MCF 10A (cell line): ENCODE measurements at regions of chr15 and their contacts with region 1.

Region 1: DNA sequence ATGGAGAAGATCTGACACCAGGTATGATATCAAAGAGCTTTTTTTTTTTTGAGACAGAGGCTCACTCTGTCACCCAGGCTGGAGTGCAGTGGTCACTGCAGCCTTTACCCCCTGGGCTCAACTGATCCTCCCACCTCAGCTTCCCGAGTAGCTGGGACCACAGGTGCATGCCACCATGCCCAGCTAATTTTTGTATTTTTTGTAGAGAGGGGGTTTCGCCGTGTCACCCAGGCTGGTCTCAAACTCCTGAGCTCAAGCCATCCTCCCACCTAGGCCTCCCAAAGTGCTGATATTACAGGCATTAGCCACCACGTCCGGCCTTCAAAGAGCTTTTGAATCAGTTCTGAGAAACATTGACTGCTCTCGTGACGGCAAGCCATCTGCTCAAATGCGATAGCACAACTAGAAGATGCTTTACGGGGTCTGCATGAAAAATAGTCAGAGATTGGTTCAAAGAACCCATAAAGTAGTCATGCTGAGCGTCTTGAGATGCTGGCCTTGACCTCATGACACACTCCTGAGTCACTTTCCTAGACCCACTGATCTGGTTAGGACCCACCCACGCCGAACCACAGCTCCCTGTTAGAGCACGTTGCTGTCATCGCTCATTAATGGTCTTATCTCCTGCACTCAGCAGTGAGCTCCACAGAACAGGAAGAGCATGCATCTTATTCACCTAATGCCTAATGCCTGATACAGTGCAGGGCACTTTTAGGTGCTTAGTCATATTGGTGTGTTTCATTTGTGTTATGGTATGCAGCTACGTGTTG is 57.0 kb upstream of the NR2F2 start:
- DNase-seq: peak; percentile 91
- H3K4me3 Mint-ChIP-seq: peak overlapping the region; percentile 4
- H3K27ac Mint-ChIP-seq: peak overlapping the region; percentile 69
- H3K4me1 Mint-ChIP-seq: peaks cover 48% of the 10 kb centered on the region
- H3K27me3 Mint-ChIP-seq: no peaks in the 10 kb centered on the region
- CTCF ChIP-seq: no peak

Region 2: GRCh38 chr15:96115642-96116041 is 157.9 kb before region 1 on chr15:
- CTCF ChIA-PET with region 1: no interaction called
- POLR2A ChIA-PET with region 1: interaction called, 3 read pairs
- intact Hi-C with region 1: loop called (anchors 10 kb)
- DNase-seq: no peak
- H3K4me3 Mint-ChIP-seq: no peak overlapping the region
- H3K27ac Mint-ChIP-seq: no peak overlapping the region
- H3K4me1 Mint-ChIP-seq: no peaks in the 10 kb centered on the region
- H3K27me3 Mint-ChIP-seq: no peaks in the 10 kb centered on the region
- CTCF ChIP-seq: no peak

Region 3: DNA sequence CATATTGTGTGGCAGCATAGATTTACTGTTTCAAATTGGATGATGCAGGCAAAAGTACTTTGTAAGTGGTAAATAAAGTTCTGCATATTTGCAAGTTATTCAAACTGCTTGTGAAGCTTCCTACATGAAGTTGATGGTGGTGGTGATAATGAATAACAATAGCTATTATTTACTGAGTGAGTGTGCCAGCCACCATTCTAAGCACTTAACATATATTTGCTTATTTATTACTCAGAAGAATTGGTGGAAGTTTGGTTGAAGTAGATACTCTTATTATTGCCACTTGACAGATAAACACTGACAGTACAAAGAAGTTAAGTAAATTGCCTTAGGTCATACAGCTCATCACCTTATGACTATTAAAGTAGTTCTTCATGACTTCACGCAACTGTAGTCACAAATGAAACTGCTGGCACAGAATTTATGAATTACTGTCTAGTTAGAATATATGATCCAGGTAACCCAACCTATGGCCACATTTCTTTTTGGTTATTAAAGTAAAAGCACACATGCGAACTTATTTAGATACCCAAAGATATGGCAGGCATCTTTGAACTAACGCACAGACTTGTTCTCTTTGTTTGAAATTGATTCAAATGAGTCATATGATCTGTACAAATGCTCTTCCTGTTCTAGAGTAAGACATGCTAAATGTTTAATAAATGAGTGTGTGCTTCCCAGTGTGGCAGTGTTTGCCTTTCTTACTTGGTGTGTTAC is 42.9 kb before region 1 on chr15:
- CTCF ChIA-PET with region 1: no interaction called
- POLR2A ChIA-PET with region 1: no interaction called
- intact Hi-C with region 1: loop called (anchors 1 kb)
- DNase-seq: peak; percentile 45
- H3K4me3 Mint-ChIP-seq: no peak overlapping the region
- H3K27ac Mint-ChIP-seq: peak overlapping the region; percentile 49
- H3K4me1 Mint-ChIP-seq: peaks cover 34% of the 10 kb centered on the region
- H3K27me3 Mint-ChIP-seq: no peaks in the 10 kb centered on the region
- CTCF ChIP-seq: no peak

Region 4: DNA sequence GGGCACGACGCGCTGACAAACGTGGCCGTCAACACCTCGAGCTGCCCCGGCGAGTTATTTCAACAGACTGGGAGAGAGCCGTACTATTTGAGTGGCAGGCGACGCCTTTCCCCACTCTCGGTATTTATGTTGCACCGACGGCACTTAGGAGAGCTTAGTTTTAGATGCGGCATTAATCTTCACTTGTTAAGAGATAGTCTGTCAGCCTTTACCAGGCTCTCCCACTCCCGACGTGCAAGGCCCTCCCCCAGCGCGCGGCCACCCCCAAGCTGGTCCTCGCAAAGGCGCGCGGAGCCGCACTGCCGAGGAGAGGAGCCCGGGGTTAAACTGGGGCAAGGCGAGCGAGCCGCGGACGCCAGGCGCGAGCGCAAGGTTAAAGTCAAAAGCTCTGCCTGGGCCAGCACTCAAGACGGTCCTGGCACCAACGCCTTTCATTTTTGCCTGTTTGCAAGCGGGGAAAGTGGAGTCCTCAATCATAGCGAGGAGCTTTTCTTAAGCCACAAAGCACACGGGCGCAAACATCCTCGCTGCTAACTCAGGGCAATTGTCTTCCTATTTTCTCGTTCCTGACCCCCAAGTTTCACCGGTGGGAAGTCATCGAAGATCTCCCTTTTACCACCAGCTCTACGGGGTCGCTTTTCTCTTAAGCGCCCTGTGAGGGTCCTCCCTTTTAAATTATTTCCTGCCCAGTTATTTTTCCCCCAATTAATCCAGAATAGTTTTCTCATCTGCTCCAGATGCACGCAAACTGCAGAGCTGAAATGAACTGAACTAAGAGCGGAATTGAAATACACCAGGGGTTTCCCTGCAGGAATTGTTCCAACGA is 143.6 kb after region 1 on chr15:
- CTCF ChIA-PET with region 1: no interaction called
- POLR2A ChIA-PET with region 1: no interaction called
- intact Hi-C with region 1: no loop called
- DNase-seq: no peak
- H3K4me3 Mint-ChIP-seq: no peak overlapping the region
- H3K27ac Mint-ChIP-seq: no peak overlapping the region
- H3K4me1 Mint-ChIP-seq: no peaks in the 10 kb centered on the region
- H3K27me3 Mint-ChIP-seq: peaks cover 94% of the 10 kb centered on the region
- CTCF ChIP-seq: no peak

Region 5: GRCh38 chr15:96524676-96525417 is 251.3 kb after region 1 on chr15:
- CTCF ChIA-PET with region 1: no interaction called
- POLR2A ChIA-PET with region 1: no interaction called
- intact Hi-C with region 1: no loop called
- DNase-seq: no peak
- H3K4me3 Mint-ChIP-seq: no peak overlapping the region
- H3K27ac Mint-ChIP-seq: no peak overlapping the region
- H3K4me1 Mint-ChIP-seq: no peaks in the 10 kb centered on the region
- H3K27me3 Mint-ChIP-seq: peaks cover 77% of the 10 kb centered on the region
- CTCF ChIP-seq: no peak